Activated CD8-positive, alpha-beta T cell treated with anti-CD3 and anti-CD28 coated beads for 36 hours (primary cell): ENCODE measurements at regions of chr2 and their contacts with region 1.

Region 1: GRCh38 chr2:68943581-68944568 is 8.8 kb downstream of the GKN2 start:
- DNase-seq: peak; percentile 63
- ATAC-seq: peak; percentile 87
- H3K4me3 Mint-ChIP-seq: no peak overlapping the region
- H3K27ac Mint-ChIP-seq: no peak overlapping the region
- H3K4me1 Mint-ChIP-seq: no peaks in the 10 kb centered on the region
- H3K27me3 Mint-ChIP-seq: peaks cover 21% of the 10 kb centered on the region
- CTCF ChIP-seq: peak; percentile 87

Region 2: DNA sequence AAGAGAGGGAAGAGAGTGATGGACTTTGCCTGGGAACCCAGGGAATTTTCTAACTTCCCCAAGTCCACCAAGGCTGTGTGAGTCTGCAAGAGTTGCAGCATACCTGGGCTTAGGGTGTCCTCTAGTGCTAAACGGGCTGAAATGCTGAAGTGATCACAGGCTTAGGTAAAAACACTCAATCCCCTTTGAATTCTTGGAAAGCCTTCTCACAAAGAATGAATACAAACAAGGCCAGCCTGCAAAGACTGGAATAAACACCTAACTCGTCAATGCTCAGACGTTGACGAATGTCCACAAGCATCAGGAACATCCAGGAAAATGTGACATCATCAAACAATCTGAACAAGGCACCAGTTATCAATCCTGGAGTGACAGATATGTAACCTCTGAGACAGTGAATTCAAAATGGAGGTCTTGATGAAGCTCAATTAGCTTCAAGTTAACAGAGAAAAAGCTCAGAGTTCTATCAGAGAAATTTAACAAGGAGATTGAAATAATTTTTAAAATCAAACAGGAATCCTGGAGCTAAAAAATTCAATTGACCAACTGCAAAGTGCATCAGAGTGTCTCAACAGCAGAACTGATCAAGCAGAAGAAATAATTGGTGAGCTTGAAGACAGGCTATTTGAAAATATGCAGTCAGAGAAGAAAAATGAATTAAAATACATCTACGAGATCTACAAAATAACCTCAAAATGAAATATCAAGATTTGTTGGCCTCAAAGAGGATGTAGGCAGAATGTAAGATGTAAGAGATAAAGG is 42.5 kb before region 1 on chr2:
- CTCF ChIA-PET with region 1: no interaction called
- POLR2A ChIA-PET with region 1: no interaction called
- intact Hi-C with region 1: no loop called
- DNase-seq: no peak
- ATAC-seq: no peak
- H3K4me3 Mint-ChIP-seq: no peak overlapping the region
- H3K27ac Mint-ChIP-seq: no peak overlapping the region
- H3K4me1 Mint-ChIP-seq: no peaks in the 10 kb centered on the region
- H3K27me3 Mint-ChIP-seq: no peaks in the 10 kb centered on the region
- CTCF ChIP-seq: no peak

Region 3: GRCh38 chr2:69001879-69002278 is 58.0 kb after region 1 on chr2:
- CTCF ChIA-PET with region 1: interaction called, 13 read pairs
- POLR2A ChIA-PET with region 1: no interaction called
- intact Hi-C with region 1: no loop called
- DNase-seq: no peak
- ATAC-seq: no peak
- H3K4me3 Mint-ChIP-seq: no peak overlapping the region
- H3K27ac Mint-ChIP-seq: no peak overlapping the region
- H3K4me1 Mint-ChIP-seq: no peaks in the 10 kb centered on the region
- H3K27me3 Mint-ChIP-seq: peaks cover 27% of the 10 kb centered on the region
- CTCF ChIP-seq: no peak